Esophagus muscularis mucosa (tissue), 4 donors: ENCODE measurements at regions of chr4 and their contacts with region 1.

Region 1: DNA sequence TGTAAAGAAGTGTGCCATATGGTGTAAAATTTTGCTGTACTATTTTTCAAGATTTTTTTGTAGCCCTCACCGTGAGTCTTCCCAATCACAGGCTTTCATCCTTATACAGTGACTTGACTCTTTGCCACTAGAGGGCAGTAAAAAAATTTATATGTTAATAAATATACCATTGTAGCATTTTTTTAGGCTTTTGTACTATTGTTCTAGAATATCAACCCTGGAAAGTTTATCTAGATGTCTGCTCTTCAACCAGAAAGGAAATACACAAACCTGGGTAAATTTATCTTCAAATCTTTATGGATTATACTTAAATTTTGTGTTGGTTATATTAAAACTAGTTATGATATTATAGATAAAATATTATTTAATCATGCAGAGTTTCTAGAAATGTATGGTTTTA is 235.3 kb downstream of the TENM3 start:
- DNase-seq: no peak
- H3K4me3 ChIP-seq: no peak overlapping the region
- H3K27ac ChIP-seq: no peak overlapping the region
- H3K4me1 ChIP-seq: no peaks in the 10 kb centered on the region
- H3K27me3 ChIP-seq: no peaks in the 10 kb centered on the region
- CTCF ChIP-seq: peak; percentile 52 to 70 (median 67)
- EP300 ChIP-seq: no peak
- POLR2A ChIP-seq: no peak

Region 2: DNA sequence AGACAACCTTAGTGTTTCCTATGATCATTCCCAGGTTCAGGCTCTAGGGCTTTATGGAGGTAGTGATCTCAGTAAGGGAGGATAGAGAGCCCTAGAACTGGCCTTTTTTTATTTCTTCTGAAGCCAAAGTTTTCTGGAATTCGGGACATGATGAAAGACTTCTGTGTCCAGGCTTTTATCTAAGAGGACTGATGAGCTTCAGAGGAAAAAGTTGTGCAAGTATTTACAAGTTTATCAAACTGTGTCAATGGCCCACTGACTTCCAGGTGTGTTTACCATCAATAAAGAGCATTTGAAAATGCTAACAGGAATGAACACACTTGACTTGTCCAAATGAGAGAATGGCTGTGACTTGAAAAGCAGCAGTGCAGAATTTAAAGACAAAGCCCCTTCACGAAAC is 184.1 kb after region 1 on chr4:
- intact Hi-C with region 1: no loop called
- DNase-seq: no peak
- H3K4me3 ChIP-seq: no peak overlapping the region
- H3K27ac ChIP-seq: no peak overlapping the region
- H3K4me1 ChIP-seq: no peaks in the 10 kb centered on the region
- H3K27me3 ChIP-seq: no peaks in the 10 kb centered on the region
- CTCF ChIP-seq: no peak
- EP300 ChIP-seq: no peak
- POLR2A ChIP-seq: no peak

Region 3: GRCh38 chr4:182806259-182807252 is 328.1 kb after region 1 on chr4:
- intact Hi-C with region 1: loop called (anchors 5 kb)
- DNase-seq: no peak
- H3K4me3 ChIP-seq: peak overlapping the region; percentile 55 to 62 (median 60)
- H3K27ac ChIP-seq: peak overlapping the region in 3 of 4 donors; percentile 29 to 53 (median 42)
- H3K4me1 ChIP-seq: peaks cover 4 to 15% (median 9%) of the 10 kb centered on the region in 4 donors
- H3K27me3 ChIP-seq: peaks cover 0 to 9% (median 0%) of the 10 kb centered on the region in 4 donors
- CTCF ChIP-seq: peak; percentile 79 to 93 (median 84)
- EP300 ChIP-seq: no peak
- POLR2A ChIP-seq: no peak